Naive thymus-derived CD4-positive, alpha-beta T cell (primary cell): ENCODE measurements at regions of chr14 and their contacts with region 1.

Region 1: GRCh38 chr14:24442273-24443052 is at the start of gene SDR39U1:
- DNase-seq: peak; percentile 81 to 99 (median 98)
- ATAC-seq: peak; percentile 93
- H3K4me3 ChIP-seq: peak within 1 kb of the TSS; percentile 85
- H3K4me3 Mint-ChIP-seq: peak within 1 kb of the TSS; percentile 91 to 98 (median 95)
- H3K27ac ChIP-seq: peak within 1 kb of the TSS; percentile 98
- H3K27ac Mint-ChIP-seq: peak within 1 kb of the TSS; percentile 92 to 99 (median 98)
- H3K4me1 ChIP-seq: peaks cover 20 to 32% of the 10 kb centered on the region in 2 donors
- H3K4me1 Mint-ChIP-seq: peaks cover 27 to 57% (median 49%) of the 10 kb centered on the region in 7 donors
- H3K27me3 ChIP-seq: no peaks in the 10 kb centered on the region
- H3K27me3 Mint-ChIP-seq: peaks cover 0 to 3% (median 0%) of the 10 kb centered on the region in 5 donors
- total RNA-seq, gene SDR39U1: 64.7 to 137 (median 96.2) TPM

Region 2: DNA sequence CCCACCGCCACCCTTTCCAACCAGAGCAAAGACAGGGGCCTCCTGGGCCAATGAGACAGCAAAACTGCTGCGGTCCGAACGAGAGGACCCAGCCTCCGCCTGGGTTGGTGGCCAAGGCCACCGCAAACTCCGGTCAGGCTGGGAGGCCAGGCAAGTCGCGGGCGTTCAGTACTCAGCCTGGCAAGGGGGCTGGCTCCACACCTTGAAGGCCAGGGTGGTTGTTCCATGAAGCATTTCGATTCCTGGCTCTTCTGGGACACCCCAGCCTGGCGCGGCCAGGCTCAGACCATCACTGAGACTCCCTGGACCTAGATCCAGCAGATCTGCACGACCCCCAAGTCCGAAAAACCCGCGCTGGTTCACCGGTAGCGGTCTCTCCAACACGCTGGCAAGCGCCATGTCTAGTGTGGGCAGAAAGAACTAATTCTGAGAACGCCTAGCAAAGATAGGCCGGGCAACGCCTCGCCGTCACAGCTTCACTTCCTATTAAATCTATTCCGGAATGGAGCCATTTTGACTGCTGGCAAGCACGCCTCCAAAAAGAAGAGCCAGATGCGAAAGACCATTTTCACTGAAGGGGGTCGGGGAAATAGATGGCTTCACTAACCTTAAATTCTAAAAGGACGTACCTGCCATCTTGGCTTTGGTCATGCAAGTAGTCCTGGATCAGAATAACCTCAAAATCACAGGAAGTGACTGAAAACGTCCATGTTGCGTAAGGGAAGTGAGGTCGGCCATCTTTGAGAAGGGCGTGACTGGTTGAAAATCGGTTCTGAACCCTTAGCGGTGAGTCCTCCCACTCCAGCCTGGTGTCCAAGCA is 1407.8 kb before region 1 on chr14 and contains the start of gene PSMB5:
- CTCF ChIA-PET with region 1: no interaction called
- POLR2A ChIA-PET with region 1: no interaction called
- intact Hi-C with region 1: loop called in 1 of 2 experiments (anchors 5 kb)
- DNase-seq: peak; percentile 63 to 94 (median 91)
- ATAC-seq: peak; percentile 95
- H3K4me3 ChIP-seq: peak within 1 kb of the TSS; percentile 79
- H3K4me3 Mint-ChIP-seq: peak within 1 kb of the TSS; percentile 87 to 96 (median 92)
- H3K27ac ChIP-seq: peak within 1 kb of the TSS; percentile 83
- H3K27ac Mint-ChIP-seq: peak within 1 kb of the TSS; percentile 93 to 99 (median 96)
- H3K4me1 ChIP-seq: peaks cover 9 to 17% of the 10 kb centered on the region in 2 donors
- H3K4me1 Mint-ChIP-seq: peaks cover 22 to 43% (median 29%) of the 10 kb centered on the region in 7 donors
- H3K27me3 ChIP-seq: no peaks in the 10 kb centered on the region
- H3K27me3 Mint-ChIP-seq: no peaks in the 10 kb centered on the region
- total RNA-seq, gene PSMB5: 19.2 to 69.1 (median 32.8) TPM

Region 3: GRCh38 chr14:24141097-24141880 is 301.2 kb before region 1 on chr14 and contains the start of gene EMC9:
- CTCF ChIA-PET with region 1: no interaction called
- POLR2A ChIA-PET with region 1: no interaction called
- intact Hi-C with region 1: loop called (anchors 2 kb)
- DNase-seq: peak; percentile 90 to 100 (median 99)
- ATAC-seq: peak; percentile 94
- H3K4me3 ChIP-seq: peak within 1 kb of the TSS; percentile 87
- H3K4me3 Mint-ChIP-seq: peak within 1 kb of the TSS; percentile 85 to 100 (median 94)
- H3K27ac ChIP-seq: peak within 1 kb of the TSS; percentile 83
- H3K27ac Mint-ChIP-seq: peak within 1 kb of the TSS; percentile 83 to 96 (median 93)
- H3K4me1 ChIP-seq: peaks cover 33 to 43% of the 10 kb centered on the region in 2 donors
- H3K4me1 Mint-ChIP-seq: peaks cover 47 to 87% (median 77%) of the 10 kb centered on the region in 7 donors
- H3K27me3 ChIP-seq: no peaks in the 10 kb centered on the region
- H3K27me3 Mint-ChIP-seq: no peaks in the 10 kb centered on the region
- total RNA-seq, gene EMC9: 9.0 to 25.5 (median 22.3) TPM

Region 4: DNA sequence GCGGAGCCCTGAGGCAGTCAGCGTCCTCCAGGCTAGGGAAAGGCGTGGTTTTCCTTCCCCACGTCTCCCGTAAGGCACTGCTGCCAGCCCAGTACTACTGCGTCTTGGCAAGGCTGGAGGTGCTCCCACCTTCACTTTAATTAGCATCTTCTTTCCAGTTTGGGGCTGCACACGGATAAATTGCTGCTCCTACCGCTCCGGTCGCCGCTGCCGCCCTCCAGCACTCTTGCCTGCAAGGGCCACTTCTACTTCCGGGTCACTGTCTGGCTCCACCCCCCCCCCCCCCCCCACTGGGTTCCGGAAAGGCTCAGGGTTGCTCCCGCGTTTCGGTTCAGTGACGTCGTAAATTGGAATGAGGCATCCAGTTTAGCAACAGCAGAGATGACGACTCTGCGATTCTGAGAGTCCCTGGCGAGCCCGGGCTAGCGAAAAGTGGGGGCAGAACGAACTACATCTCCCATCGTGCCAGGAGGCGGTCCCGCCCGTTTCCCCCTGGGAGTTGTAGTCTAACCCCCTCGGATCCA is 210.3 kb before region 1 on chr14 and contains the start of gene NEDD8:
- CTCF ChIA-PET with region 1: no interaction called
- POLR2A ChIA-PET with region 1: no interaction called
- intact Hi-C with region 1: loop called (anchors 1 kb)
- DNase-seq: peak; percentile 72 to 91 (median 88)
- ATAC-seq: peak; percentile 91
- H3K4me3 ChIP-seq: peak within 1 kb of the TSS; percentile 99
- H3K4me3 Mint-ChIP-seq: peak within 1 kb of the TSS; percentile 86 to 100 (median 96)
- H3K27ac ChIP-seq: peak within 1 kb of the TSS; percentile 89
- H3K27ac Mint-ChIP-seq: peak within 1 kb of the TSS; percentile 89 to 98 (median 93)
- H3K4me1 ChIP-seq: peaks cover 11 to 27% of the 10 kb centered on the region in 2 donors
- H3K4me1 Mint-ChIP-seq: peaks cover 36 to 79% (median 63%) of the 10 kb centered on the region in 7 donors
- H3K27me3 ChIP-seq: no peaks in the 10 kb centered on the region
- H3K27me3 Mint-ChIP-seq: no peaks in the 10 kb centered on the region
- total RNA-seq, gene NEDD8: 73.5 to 175 (median 106) TPM

Region 5: GRCh38 chr14:24332268-24332993 is 110.0 kb before region 1 on chr14:
- CTCF ChIA-PET with region 1: interaction called, 317 read pairs
- POLR2A ChIA-PET with region 1: interaction called, 293 read pairs
- intact Hi-C with region 1: no loop called
- DNase-seq: peak; percentile 56 to 93 (median 87)
- ATAC-seq: peak; percentile 90
- H3K4me3 ChIP-seq: peak overlapping the region; percentile 43
- H3K4me3 Mint-ChIP-seq: peak overlapping the region; percentile 66 to 94 (median 83)
- H3K27ac ChIP-seq: no peak overlapping the region
- H3K27ac Mint-ChIP-seq: peak overlapping the region; percentile 57 to 93 (median 84)
- H3K4me1 ChIP-seq: peaks cover 37 to 59% of the 10 kb centered on the region in 2 donors
- H3K4me1 Mint-ChIP-seq: peaks cover 25 to 62% (median 40%) of the 10 kb centered on the region in 7 donors
- H3K27me3 ChIP-seq: peaks cover 7 to 13% of the 10 kb centered on the region in 2 donors
- H3K27me3 Mint-ChIP-seq: peaks cover 9 to 46% (median 17%) of the 10 kb centered on the region in 5 donors

Region 6: DNA sequence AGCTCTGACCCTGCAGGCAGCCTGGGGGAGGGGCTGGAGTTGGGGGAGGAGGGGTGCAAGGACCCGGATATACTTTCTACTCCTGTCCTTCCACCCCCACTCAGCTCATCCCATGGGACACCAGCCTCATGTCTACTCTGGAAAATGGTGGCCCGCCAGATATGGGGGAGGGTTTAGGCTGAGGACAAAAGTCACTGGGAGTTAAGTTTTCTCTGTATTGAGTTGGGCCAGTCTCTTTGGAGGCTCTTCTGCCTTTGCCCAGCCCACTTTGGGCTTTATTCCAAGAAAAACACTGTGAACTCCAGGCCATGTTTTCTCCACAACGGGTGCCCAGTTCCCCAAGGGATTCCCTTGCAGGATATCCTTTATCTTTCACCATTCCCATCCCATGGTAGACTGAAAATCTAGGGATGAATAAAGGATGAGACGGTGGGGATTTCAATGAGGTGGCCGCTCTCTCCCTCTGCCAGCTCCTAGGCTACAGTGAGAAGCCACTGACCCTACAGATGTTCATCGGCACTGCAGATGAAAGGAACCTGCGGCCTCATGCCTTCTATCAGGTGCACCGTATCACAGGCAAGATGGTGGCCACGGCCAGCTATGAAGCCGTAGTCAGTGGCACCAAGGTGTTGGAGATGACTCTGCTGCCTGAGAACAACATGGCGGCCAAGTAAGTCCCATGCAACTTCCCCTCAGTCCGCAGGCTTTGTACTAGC is 69.6 kb before region 1 on chr14:
- CTCF ChIA-PET with region 1: no interaction called
- POLR2A ChIA-PET with region 1: no interaction called
- intact Hi-C with region 1: no loop called
- DNase-seq: no peak
- ATAC-seq: no peak
- H3K4me3 ChIP-seq: no peak overlapping the region
- H3K4me3 Mint-ChIP-seq: no peak overlapping the region
- H3K27ac ChIP-seq: no peak overlapping the region
- H3K27ac Mint-ChIP-seq: no peak overlapping the region
- H3K4me1 ChIP-seq: peaks cover 0 to 4% of the 10 kb centered on the region in 2 donors
- H3K4me1 Mint-ChIP-seq: peaks cover 0 to 11% (median 7%) of the 10 kb centered on the region in 7 donors
- H3K27me3 ChIP-seq: no peaks in the 10 kb centered on the region
- H3K27me3 Mint-ChIP-seq: peaks cover 5 to 28% (median 10%) of the 10 kb centered on the region in 5 donors

Region 7: DNA sequence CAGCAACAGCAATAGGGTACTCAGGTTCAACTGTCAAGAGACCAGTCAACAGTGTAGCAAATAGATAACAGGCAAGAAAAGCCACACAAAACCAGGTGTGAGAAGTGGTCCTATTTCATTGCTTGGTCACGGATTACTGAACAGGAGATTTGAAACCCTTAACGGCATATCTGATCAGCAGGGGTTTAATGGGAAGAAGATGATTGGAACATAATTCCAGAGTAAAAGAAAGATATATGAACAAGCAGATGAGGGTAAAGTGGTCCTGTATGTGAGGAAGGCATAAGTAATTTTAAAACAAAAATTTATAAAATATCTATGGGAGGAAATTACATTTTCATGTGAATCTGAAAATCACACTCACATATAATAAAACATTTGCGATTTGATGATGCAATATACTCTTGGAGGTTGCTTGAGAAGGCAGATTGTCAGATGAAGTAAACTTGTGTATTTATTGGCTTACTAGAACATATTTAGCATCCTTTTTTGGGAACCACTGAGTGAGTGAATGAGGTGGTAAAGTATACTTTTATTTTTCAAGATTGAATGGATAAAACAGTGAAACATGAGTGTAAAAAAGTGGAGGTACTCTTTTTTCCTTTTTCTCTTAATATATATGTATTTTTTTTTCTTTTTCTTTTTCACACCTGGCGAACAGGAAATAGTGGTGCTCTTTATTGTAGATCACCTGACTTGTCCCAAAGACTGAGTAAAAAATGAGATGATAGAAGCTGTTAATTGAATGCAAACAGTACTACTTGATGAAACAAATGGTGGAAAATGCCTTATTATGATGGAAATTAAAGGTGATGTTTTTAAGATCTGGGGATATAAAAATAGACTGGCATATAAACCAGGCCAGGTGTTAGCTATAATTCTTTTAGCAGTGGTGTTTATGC is 21.7 kb after region 1 on chr14:
- CTCF ChIA-PET with region 1: no interaction called
- POLR2A ChIA-PET with region 1: interaction called, 5 read pairs
- intact Hi-C with region 1: loop called in 1 of 2 experiments (anchors 2 kb)
- DNase-seq: no peak
- ATAC-seq: no peak
- H3K4me3 ChIP-seq: no peak overlapping the region
- H3K4me3 Mint-ChIP-seq: peak overlapping the region; percentile 12 to 82 (median 52)
- H3K27ac ChIP-seq: no peak overlapping the region
- H3K27ac Mint-ChIP-seq: peak overlapping the region in 8 of 9 donors; percentile 13 to 89 (median 44)
- H3K4me1 ChIP-seq: peaks cover 22 to 23% of the 10 kb centered on the region in 2 donors
- H3K4me1 Mint-ChIP-seq: peaks cover 9 to 58% (median 32%) of the 10 kb centered on the region in 7 donors
- H3K27me3 ChIP-seq: no peaks in the 10 kb centered on the region
- H3K27me3 Mint-ChIP-seq: no peaks in the 10 kb centered on the region

Region 8: DNA sequence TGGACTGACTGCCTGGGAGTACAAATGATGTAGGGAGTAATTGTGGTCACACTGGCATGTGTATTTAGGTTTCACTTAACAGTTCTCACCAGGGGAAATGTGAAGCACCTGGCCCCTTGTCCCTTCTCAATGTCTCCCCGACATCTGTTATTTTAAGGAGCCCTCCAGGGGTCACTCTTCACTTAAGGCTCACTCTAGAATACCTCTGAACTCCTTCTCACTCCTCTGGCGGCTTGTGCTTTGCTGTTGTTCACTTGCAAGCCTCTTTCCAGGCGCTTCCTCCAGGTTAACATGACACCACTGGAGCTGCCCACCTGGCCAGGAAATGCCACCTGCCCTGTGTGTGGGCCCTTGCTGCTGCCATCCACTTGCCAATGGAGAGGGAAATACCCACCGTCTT is 248.0 kb after region 1 on chr14:
- CTCF ChIA-PET with region 1: no interaction called
- POLR2A ChIA-PET with region 1: no interaction called
- intact Hi-C with region 1: loop called in 1 of 2 experiments (anchors 5 kb)
- DNase-seq: no peak
- ATAC-seq: no peak
- H3K4me3 ChIP-seq: no peak overlapping the region
- H3K4me3 Mint-ChIP-seq: no peak overlapping the region
- H3K27ac ChIP-seq: no peak overlapping the region
- H3K27ac Mint-ChIP-seq: no peak overlapping the region
- H3K4me1 ChIP-seq: peaks cover 0 to 45% of the 10 kb centered on the region in 2 donors
- H3K4me1 Mint-ChIP-seq: peaks cover 11 to 44% (median 12%) of the 10 kb centered on the region in 7 donors
- H3K27me3 ChIP-seq: no peaks in the 10 kb centered on the region
- H3K27me3 Mint-ChIP-seq: peaks cover 2 to 10% (median 4%) of the 10 kb centered on the region in 5 donors